Psoas muscle (tissue), 8 donors: ENCODE measurements at regions of chr2 and their contacts with region 1.

Region 1: DNA sequence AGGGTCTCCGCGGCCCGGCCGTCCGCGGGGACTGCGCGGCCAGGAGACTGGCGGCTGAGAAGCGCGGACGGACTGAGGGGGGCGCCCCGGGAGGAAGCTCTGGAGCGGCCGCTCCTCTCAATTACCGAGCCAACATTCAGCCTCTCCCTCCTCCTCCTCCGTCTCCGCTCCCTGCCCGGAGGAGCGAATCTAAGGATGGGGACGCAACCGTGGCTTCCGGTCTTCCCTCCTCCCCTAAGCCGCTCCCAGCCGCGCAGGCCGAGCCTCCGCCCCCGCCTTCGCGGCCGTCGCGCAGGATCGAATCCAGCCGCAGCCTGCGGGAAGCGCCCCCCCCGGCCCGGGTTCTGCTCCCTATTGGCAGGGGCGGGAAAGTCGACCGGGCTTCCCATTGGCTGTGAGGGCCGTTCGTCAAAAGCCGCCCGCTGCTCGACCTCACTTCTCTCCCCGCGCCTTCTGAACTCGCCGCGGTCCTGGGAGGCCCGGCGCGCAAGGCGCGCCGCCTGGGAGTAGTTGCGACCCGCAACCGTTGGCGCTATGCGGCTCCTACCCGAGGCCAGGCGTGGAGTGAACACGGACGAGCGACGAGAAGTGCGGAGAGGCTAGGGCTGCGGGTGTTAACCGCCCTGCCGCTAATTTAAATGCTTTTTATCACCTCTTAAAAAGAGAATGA is at the start of gene HNRNPLL:
- DNase-seq: peak; percentile 99
- ATAC-seq: peak; percentile 93 to 96 (median 94)
- H3K4me3 ChIP-seq: peak within 1 kb of the TSS; percentile 80
- H3K27ac ChIP-seq: peak within 1 kb of the TSS; percentile 97
- H3K4me1 ChIP-seq: peaks cover 38% of the 10 kb centered on the region
- H3K27me3 ChIP-seq: no peaks in the 10 kb centered on the region
- CTCF ChIP-seq: no peak
- total RNA-seq, gene HNRNPLL: 17.8 to 22.4 (median 19.6) TPM

Region 2: DNA sequence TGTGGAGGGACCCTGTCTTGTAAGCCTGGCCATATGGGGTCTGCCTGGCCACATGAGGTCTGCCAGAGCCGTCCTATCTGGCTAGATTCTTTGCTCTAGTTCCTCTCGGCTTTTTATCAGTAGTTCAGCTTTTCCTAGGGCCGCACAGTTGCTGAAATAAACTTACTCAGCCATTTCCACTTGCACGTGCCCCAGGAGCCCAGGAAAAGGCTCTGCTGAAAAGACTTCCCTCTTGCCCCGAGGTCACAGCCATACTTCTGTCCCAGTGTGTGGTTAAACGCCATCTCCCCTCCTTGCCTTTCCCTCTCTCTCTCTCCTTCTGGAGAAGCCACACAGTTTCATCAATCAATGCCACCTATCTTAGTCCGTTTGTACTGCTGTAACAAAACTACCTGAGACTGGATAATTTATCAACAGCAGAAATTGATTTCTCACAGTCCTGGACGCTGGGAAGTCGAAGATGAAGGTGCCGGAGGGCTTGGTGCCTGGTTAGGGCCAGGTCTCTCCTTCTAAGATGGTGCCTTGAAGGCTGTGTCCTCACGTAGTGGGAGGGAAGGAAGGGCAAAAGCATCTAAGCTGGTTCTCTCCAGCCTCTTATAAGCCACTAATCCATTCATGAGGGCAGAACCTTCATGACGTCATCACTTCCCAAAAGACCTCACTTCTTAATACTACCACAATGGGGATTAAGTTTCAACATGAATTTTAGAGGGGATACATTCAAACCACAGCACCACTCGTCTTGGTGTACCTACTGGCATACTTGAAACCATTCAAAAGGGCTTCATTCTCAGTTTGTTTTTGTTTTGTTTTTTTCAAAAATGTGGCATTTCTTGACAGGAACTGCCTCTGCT is 51.9 kb after region 1 on chr2:
- intact Hi-C with region 1: loop called in 1 of 2 experiments (anchors 5 kb)
- DNase-seq: no peak
- ATAC-seq: no peak
- H3K4me3 ChIP-seq: no peak overlapping the region
- H3K27ac ChIP-seq: no peak overlapping the region
- H3K4me1 ChIP-seq: no peaks in the 10 kb centered on the region
- H3K27me3 ChIP-seq: no peaks in the 10 kb centered on the region
- CTCF ChIP-seq: no peak

Region 3: DNA sequence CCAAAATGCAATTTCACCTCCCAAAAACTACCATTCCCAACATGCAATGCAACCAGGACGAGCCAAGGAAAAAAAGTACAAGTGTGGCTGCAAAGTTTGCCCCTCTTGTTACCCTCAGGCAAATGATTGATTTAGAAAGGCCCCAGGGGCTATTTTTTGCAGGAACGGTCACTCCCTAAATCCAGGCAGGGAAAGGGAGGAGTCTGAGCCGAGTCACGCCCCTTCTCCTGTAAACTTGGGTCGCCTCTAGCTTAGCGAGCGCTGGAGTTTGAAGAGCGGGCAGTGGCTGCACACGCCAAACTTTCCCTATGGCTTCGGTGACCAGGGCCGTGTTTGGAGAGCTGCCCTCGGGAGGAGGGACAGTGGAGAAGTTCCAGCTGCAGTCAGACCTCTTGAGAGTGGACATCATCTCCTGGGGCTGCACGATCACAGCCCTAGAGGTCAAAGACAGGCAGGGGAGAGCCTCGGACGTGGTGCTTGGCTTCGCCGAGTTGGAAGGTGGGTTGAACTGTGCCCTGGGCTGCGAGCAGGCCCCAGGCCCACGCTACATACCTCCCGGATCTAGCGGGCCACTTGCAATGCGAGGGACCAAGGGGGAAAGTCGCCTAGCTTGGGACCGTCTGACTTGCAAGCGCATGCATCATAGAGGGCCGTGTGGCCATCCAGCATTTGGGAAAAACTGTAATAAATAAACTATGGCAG is 63.1 kb after region 1 on chr2 and contains the start of gene GALM:
- intact Hi-C with region 1: loop called (anchors 5 kb)
- DNase-seq: peak; percentile 76 to 89
- ATAC-seq: peak; percentile 95 to 97 (median 95)
- H3K4me3 ChIP-seq: peak within 1 kb of the TSS; percentile 73
- H3K27ac ChIP-seq: peak within 1 kb of the TSS; percentile 71
- H3K4me1 ChIP-seq: peaks cover 18% of the 10 kb centered on the region
- H3K27me3 ChIP-seq: no peaks in the 10 kb centered on the region
- CTCF ChIP-seq: no peak
- total RNA-seq, gene GALM: 3.6 to 16.1 (median 4.8) TPM

Region 4: DNA sequence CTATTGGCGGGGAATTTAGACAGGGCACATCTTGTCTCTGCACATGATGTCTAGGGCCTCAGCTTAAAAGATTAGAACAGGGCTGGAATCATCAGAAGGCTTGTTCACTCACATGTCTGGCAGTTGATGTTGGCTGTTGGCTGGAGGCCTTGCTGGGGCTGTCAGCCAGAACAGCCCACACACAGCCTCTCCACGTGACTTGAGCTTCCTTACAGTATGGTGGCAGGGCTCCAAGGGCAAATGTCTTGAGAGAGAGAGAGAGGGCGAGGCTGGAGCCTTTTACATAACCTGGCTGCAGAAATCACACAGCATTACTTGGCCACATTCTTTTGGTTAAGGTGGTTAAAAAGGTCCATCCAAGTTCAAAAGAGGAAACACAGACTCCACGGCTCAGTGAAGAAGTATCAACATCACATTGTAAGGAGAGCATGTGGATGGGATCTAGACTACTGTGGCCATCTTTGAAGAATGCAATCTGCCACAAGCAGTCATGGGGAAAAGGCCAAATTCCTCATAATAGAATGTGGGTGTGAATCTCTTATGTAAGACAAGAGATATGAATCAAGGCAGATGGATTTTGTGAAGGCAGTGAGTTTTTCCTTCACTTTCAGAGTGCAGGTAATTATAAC is 117.9 kb after region 1 on chr2:
- intact Hi-C with region 1: loop called in 1 of 2 experiments (anchors 5 kb)
- DNase-seq: peak; percentile 70 to 89
- ATAC-seq: peak; percentile 73 to 83 (median 81)
- H3K4me3 ChIP-seq: no peak overlapping the region
- H3K27ac ChIP-seq: peak overlapping the region; percentile 82
- H3K4me1 ChIP-seq: peaks cover 23% of the 10 kb centered on the region
- H3K27me3 ChIP-seq: no peaks in the 10 kb centered on the region
- CTCF ChIP-seq: no peak

Region 5: GRCh38 chr2:38750891-38751595 is 148.2 kb after region 1 on chr2 and contains the start of gene SRSF7:
- intact Hi-C with region 1: loop called in 1 of 2 experiments (anchors 1 kb)
- DNase-seq: peak; percentile 96 to 99
- ATAC-seq: peak; percentile 92 to 94 (median 93)
- H3K4me3 ChIP-seq: peak within 1 kb of the TSS; percentile 98
- H3K27ac ChIP-seq: peak within 1 kb of the TSS; percentile 100
- H3K4me1 ChIP-seq: peaks cover 24% of the 10 kb centered on the region
- H3K27me3 ChIP-seq: no peaks in the 10 kb centered on the region
- CTCF ChIP-seq: no peak
- total RNA-seq, gene SRSF7: 35.5 to 78.2 (median 56.7) TPM